ENCODE measurements at regions of chr2 and their contacts with region 1.

Region 1: DNA sequence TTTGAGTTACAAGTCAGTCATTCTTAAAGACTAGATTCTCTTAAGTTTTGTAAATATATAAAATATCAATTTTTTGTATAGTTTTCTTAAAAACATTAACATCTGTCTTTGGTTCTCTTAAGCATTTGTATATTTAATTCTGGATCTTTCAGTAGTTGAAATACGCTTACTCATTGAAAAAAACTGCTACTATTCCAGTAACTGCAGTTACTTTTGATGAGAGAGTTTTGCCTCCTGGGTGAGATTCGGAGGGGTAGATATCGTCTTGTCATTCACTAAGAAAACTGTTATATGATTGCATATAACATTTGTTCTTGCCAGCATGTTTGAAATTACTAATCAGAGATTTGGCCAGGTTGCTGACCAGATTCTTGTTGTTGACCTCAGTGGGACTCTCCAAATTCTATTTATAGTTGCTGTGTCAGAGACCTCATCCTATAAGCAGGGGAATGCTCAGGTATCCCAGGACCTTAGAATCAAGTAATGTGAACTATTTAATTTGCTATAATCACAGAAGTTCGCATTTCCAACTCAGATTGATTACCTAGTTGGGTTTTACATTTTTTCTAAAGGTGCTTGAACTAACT is 7.9 kb downstream of the AGPS start:
- DNase-seq: no peak
- H3K4me3 ChIP-seq: no peak overlapping the region
- H3K27ac ChIP-seq: no peak overlapping the region
- H3K4me1 ChIP-seq: peaks cover 4% of the 10 kb centered on the region in 2 donors
- H3K27me3 ChIP-seq: no peaks in the 10 kb centered on the region
- CTCF ChIP-seq: no peak
- POLR2A ChIP-seq: no peak

Region 2: DNA sequence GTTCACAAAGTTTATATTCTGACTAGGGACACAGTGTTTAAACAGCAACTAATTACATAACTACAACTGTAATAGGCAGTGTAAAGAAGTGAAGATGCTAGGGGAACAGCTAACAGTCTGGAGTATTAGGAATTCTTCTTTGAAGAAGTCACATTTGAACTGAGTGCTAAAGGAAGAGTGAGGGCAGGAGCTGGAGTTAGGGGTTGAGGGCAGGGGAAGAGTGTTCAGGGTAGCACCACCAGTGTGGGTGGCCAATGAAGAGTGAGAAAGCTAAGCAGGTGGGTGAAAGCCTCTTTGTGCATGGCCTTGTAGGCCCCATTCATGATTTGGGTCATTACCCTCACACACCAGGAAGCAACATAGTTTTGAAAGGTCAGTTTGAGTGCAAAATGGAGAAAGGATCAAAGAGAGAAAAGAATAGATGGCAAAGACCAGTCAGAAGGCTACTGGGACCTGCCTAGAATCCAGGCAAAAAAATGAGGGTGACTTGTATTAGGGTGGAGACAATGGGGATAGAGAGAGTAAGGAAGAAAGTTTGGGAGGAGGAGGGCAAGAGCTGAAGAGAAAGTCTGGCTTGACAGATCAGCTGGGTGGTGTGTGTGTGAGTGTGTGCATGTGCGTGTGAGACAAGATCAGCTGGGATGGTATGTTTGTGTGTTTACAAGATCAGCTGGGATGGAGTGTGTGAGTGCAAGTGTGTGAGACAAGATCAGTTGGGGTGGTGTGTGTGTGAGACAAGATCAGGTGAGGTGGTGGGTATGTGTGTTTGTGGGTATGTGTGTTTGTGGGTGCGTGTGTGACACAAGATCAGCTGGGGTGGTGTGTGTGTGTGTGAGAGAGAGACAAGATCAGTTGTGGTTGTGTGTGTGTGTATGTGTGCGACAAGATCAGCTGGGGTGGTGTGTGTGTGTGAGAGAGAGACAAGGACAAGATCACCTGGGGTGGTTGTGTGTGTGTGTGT is 51.4 kb before region 1 on chr2:
- intact Hi-C with region 1: loop called (anchors 10 kb)
- DNase-seq: no peak
- H3K4me3 ChIP-seq: no peak overlapping the region
- H3K27ac ChIP-seq: no peak overlapping the region
- H3K4me1 ChIP-seq: peaks cover 0 to 10% of the 10 kb centered on the region in 2 donors
- H3K27me3 ChIP-seq: no peaks in the 10 kb centered on the region
- CTCF ChIP-seq: no peak
- POLR2A ChIP-seq: no peak